Activated T-helper 1 cell treated with anti-CD3 and anti-CD28 coated beads, Interleukin-12 subunit alpha, Interleukin-12 subunit beta, Interleukin-2, Interleukin-4 antibody, amounts not matched to agents 30 ng/mL and 10 ng/mL and 1 ng/mL, durations not matched to agents 14 hours and 24 hours and 36 hours (primary cell): ENCODE measurements at regions of chr6 and their contacts with region 1.

Region 1: GRCh38 chr6:26065952-26066380 is 21.3 kb upstream of the HFE start:
- DNase-seq: peak; percentile 50
- H3K4me3 Mint-ChIP-seq: no peak overlapping the region
- H3K27ac Mint-ChIP-seq: no peak overlapping the region
- H3K4me1 Mint-ChIP-seq: peaks cover 17% of the 10 kb centered on the region
- H3K27me3 Mint-ChIP-seq: peaks cover 7% of the 10 kb centered on the region

Region 2: GRCh38 chr6:25794784-25795183 is 271.2 kb before region 1 on chr6:
- intact Hi-C with region 1: no loop called
- DNase-seq: no peak
- H3K4me3 Mint-ChIP-seq: no peak overlapping the region
- H3K27ac Mint-ChIP-seq: no peak overlapping the region
- H3K4me1 Mint-ChIP-seq: no peaks in the 10 kb centered on the region
- H3K27me3 Mint-ChIP-seq: peaks cover 11% of the 10 kb centered on the region

Region 3: DNA sequence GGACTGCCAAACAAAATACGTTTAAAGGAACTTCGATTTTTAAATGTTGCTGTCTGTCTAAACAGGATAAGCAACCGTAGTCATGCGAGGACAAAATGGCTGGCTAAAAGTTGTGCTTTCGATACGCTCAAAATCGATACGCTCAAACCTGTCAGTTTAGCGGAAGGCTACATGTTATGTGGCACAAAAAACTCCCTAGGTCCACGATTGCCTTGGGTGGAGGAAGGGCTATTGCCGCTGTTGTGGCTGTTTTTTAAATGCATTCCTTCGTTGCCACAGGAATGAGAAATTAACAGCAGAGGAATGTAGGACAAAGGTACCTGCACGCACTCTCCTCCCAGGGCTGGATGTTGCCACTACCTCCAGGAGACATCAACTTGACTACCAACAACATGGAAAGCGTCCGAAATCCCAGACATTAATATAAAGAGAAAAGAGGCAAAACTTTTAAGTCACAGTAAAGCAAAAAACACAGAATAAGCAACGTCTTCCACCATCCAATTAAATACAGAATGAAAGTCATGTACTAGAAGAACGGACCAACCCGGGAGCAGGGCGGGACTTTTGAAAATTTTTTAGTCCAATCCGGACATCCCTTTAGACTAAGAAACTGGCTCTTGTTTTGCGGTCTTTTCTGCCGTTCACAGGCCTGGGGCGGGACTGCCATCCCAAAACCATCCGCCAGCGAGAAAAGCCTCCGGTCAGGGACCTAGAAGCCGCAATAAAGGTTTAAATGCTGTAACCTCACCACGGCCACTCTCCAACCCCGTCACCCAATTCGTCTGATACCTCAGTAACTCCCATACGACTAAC is 10.9 kb before region 1 on chr6:
- intact Hi-C with region 1: loop called (anchors 1 kb)
- DNase-seq: peak; percentile 83
- H3K4me3 Mint-ChIP-seq: peak overlapping the region; percentile 91
- H3K27ac Mint-ChIP-seq: peak overlapping the region; percentile 99
- H3K4me1 Mint-ChIP-seq: peaks cover 42% of the 10 kb centered on the region
- H3K27me3 Mint-ChIP-seq: peaks cover 3% of the 10 kb centered on the region

Region 4: GRCh38 chr6:26097268-26097875 is 31.4 kb after region 1 on chr6:
- intact Hi-C with region 1: loop called (anchors 1 kb)
- DNase-seq: peak; percentile 49
- H3K4me3 Mint-ChIP-seq: no peak overlapping the region
- H3K27ac Mint-ChIP-seq: no peak overlapping the region
- H3K4me1 Mint-ChIP-seq: peaks cover 21% of the 10 kb centered on the region
- H3K27me3 Mint-ChIP-seq: peaks cover 11% of the 10 kb centered on the region